IMR-90 (cell line): ENCODE measurements at regions of chr16 and their contacts with region 1.

Region 1: GRCh38 chr16:4936991-4937781 is at the start of gene PPL:
- DNase-seq: no peak
- ATAC-seq: peak; percentile 34
- H3K4me3 ChIP-seq: peak within 1 kb of the TSS; percentile 38
- H3K27ac ChIP-seq: no peak within 1 kb of the TSS
- H3K4me1 ChIP-seq: peaks cover 4% of the 10 kb centered on the region; the same call in 1 of the 2 replicates
- H3K27me3 ChIP-seq: peaks cover 44% of the 10 kb centered on the region
- CTCF ChIP-seq: no peak
- POLR2A ChIP-seq: no peak
- RAD21 ChIP-seq: no peak
- total RNA-seq, gene PPL: 0.28 and 0.36 TPM in 2 replicates

Region 2: GRCh38 chr16:4871071-4871470 is 66.1 kb before region 1 on chr16:
- CTCF ChIA-PET with region 1: no interaction called
- POLR2A ChIA-PET with region 1: interaction called, 13 read pairs
- dilution Hi-C with region 1: no loop called
- in situ Hi-C with region 1: no loop called
- intact Hi-C with region 1: no loop called
- DNase-seq: no peak
- ATAC-seq: no peak
- H3K4me3 ChIP-seq: no peak overlapping the region
- H3K27ac ChIP-seq: no peak overlapping the region
- H3K4me1 ChIP-seq: no peaks in the 10 kb centered on the region
- H3K27me3 ChIP-seq: no peaks in the 10 kb centered on the region
- CTCF ChIP-seq: no peak
- POLR2A ChIP-seq: no peak
- RAD21 ChIP-seq: no peak